A673 (cell line): ENCODE measurements at regions of chr20 and their contacts with region 1.

Region 1: DNA sequence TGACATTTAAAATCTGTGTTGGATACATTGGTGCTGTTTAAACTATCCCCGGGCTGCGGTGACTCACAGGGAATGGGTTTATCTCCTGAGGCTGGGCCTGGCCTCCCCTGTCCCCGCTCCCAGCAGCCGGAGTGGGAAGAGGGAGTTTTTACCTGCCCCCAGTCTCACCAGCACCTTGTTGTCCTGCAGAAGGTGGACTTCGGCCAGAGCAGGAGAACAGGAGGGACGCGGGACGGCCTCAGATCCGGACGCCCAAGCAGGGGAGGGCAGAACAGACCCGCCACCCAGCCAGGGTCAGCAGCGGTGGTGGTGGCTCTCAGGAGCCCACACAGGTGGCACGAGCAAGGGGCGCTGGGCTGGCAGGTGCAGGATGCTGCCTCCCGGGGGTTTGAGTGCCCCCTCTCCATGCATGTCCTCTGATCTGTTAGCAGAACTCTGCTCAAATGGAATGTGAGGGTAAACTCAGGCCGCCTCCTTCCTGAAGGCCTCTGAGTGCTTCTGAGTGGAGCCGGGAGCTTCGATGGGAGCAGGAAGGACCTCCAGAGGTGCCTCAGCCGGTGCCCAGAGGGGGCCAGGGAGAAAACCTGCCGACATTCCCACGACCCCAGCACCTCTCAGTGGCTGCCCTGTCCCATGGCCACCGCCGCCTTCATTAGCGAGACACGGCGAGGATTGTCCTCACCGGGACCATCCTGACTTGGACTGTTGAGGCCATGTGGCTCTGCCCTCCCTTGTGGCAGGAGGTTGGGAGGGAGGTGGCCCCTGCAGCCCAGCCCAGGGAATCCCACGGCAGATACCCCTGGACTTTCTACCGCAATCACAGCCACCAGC is 43.4 kb upstream of the MRGBP start:
- DNase-seq: no peak
- H3K4me3 ChIP-seq: no peak overlapping the region
- H3K27ac ChIP-seq: peak overlapping the region; percentile 42
- H3K4me1 ChIP-seq: peaks cover 11% of the 10 kb centered on the region
- H3K27me3 ChIP-seq: no peaks in the 10 kb centered on the region
- CTCF ChIP-seq: no peak

Region 2: DNA sequence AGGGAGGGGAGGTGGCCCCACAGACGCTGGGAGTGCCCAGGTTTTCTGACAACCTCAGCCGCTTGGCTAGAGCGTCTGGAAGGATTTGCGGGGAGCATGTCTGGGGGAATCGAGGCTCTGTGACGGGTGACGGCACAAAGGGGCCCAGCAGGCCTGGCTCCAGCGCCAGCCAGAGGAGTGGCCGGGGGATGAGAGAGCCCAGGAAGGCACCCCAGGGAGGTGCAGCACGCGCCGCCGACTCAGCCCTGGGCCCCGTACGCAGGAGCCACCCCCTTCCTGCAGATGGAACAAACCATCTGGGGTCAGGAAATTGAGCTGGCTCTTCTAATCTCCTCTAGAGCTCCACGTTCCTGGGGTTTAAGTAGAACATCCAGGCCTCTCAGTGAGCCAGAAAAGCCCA is 116.4 kb before region 1 on chr20:
- CTCF ChIA-PET with region 1: no interaction called
- POLR2A ChIA-PET with region 1: no interaction called
- intact Hi-C with region 1: no loop called
- DNase-seq: peak; percentile 81
- H3K4me3 ChIP-seq: no peak overlapping the region
- H3K27ac ChIP-seq: peak overlapping the region; percentile 49
- H3K4me1 ChIP-seq: peaks cover 22% of the 10 kb centered on the region
- H3K27me3 ChIP-seq: no peaks in the 10 kb centered on the region
- CTCF ChIP-seq: no peak

Region 3: DNA sequence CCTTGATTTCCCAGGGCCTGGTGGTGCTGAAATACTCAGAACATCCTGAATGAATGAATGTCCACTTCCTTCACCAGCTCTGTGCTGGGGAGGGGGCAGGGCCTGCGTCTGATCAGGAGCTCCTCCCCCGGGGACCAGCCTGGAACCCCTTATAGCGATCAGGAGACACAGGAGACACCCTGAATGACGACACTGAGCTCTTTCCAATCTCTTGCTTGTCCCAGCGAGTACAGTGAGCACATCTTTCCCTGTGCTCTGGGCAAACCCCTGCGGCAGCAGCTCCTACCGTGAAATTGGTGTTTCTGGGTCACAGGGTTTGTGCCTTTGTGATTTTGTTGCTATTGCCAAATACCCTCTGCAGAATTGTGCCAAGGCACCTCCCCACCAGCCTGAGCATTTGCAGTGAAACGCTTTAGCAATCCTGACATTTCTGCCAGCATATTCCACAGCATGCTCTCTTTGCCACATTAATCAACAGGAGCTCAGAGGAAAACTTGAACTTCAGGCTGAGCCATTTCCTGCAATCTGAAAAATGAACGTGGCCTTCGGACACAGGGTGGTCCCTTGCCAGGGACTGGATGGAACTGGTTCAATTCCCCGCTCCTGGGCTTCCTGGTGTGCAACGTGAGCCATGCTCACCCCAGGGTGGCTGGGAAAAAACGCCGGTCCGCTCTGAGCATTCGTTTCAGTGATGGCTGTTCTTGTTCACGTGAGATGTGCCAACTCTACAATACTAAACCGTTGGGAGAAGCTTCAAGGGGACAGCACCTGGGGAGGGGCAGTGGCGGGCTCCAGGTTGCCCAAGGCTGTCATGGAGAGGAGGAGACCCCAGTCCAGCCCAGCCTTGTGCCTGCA is 20.3 kb after region 1 on chr20:
- CTCF ChIA-PET with region 1: no interaction called
- POLR2A ChIA-PET with region 1: interaction called, 14 read pairs
- intact Hi-C with region 1: no loop called
- DNase-seq: peak; percentile 92
- H3K4me3 ChIP-seq: peak overlapping the region; percentile 76
- H3K27ac ChIP-seq: peak overlapping the region; percentile 95
- H3K4me1 ChIP-seq: peaks cover 79% of the 10 kb centered on the region
- H3K27me3 ChIP-seq: no peaks in the 10 kb centered on the region
- CTCF ChIP-seq: no peak